CD4-positive, alpha-beta T cell (primary cell): ENCODE measurements at regions of chr14 and their contacts with region 1.

Region 1: DNA sequence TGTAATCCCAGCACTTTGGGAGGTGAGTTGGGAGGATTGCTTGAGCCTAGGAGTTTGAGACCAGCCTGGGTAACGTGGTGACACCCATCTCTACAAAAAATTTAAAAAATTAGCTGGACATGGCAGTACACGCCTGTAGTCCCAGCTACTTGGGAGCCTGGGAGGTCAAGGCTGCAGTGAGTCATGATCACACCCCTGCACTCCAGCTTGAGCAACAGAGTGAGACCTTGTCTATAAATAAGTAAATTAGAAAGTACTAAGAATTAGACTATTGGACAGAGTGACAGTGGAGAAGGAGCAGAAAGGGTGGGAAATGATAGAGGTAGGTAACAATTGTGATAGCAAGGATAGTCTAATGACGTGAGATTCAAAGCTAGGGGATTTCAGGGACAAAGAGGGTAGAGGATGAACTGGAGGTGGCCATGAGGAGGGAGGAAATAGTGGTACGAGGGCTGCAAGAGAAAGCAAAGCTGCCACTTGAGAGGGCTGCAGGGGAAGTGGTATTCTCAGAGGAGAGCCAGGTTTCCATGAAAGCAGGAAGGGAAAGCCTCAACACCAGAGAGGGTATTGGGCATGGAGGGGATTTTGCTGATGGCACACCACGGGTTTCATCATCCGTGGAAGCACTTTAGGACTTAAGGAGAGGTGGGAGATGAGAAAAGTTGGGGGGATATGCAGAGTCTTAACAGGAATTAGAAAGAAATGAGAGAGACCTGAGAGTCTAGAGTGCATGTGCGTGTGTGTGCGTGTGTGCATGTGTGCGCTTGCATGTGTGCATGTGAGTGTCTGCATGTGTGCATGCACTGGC is 85.6 kb downstream of the SYNE2 start:
- DNase-seq: peak in 5 of 14 experiments; percentile 3 to 64 (median 36)
- ATAC-seq: peak; percentile 35
- H3K4me3 ChIP-seq: no peak overlapping the region
- H3K4me3 Mint-ChIP-seq: no peak overlapping the region
- H3K27ac ChIP-seq: peak overlapping the region in 1 of 2 donors; percentile 62
- H3K27ac Mint-ChIP-seq: no peak overlapping the region
- H3K4me1 ChIP-seq: peaks cover 47% of the 10 kb centered on the region
- H3K4me1 Mint-ChIP-seq: peaks cover 37% of the 10 kb centered on the region
- H3K27me3 ChIP-seq: no peaks in the 10 kb centered on the region
- H3K27me3 Mint-ChIP-seq: no peaks in the 10 kb centered on the region
- CTCF ChIP-seq: no peak

Region 2: DNA sequence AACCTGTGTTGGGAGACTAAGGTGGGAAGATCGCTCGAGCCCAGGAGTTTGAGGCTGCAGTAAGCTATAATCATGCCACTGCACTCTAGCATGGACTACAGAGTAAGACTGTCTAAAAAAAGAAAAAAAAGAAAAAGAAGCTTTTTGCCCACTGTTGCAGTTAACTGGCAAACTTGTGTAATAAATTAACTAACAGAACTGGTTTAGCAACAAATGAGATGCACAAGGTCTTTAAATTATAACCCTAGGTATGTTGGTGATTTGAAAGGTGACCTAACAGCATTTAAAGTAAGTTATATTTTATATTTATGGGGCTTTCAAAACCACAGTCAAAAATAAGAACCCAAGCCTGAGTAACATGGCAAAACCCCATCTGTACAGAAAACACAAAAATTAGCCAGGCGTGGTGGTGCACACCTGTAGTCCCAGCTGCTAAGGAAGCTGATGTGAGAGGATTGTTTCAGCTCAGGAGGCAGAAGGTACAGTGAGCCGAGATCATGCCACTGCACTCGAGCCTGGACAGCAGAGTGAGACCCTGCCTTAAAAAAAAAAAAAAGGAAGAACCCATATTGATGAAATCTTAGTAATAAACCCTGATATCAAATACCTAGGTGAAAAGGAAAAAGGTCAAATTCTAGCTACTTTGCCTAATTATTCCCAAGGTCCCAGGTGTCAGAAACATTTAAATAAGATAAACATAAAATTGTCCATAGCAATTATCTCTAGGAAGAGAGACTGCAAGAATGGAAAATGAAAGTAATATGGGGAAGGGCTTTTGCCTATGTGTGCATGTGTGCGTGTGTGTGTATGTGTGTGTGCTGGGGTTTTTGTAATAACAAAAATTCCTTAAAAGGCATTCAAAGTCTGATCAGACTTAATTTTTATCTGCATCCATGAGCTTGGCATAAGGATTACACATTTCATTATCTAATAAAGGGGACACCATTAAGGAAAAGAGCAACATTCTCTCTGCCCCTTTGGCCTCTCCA is 70.2 kb before region 1 on chr14:
- CTCF ChIA-PET with region 1: no interaction called
- POLR2A ChIA-PET with region 1: interaction called, 12 read pairs
- intact Hi-C with region 1: no loop called
- DNase-seq: peak in 6 of 14 experiments; percentile 10 to 84 (median 50)
- ATAC-seq: no peak
- H3K4me3 ChIP-seq: peak overlapping the region; percentile 12
- H3K4me3 Mint-ChIP-seq: peak overlapping the region; percentile 87
- H3K27ac ChIP-seq: peak overlapping the region; percentile 38 to 41
- H3K27ac Mint-ChIP-seq: peak overlapping the region; percentile 93
- H3K4me1 ChIP-seq: peaks cover 63% of the 10 kb centered on the region
- H3K4me1 Mint-ChIP-seq: peaks cover 71% of the 10 kb centered on the region
- H3K27me3 ChIP-seq: no peaks in the 10 kb centered on the region
- H3K27me3 Mint-ChIP-seq: no peaks in the 10 kb centered on the region
- CTCF ChIP-seq: no peak

Region 3: DNA sequence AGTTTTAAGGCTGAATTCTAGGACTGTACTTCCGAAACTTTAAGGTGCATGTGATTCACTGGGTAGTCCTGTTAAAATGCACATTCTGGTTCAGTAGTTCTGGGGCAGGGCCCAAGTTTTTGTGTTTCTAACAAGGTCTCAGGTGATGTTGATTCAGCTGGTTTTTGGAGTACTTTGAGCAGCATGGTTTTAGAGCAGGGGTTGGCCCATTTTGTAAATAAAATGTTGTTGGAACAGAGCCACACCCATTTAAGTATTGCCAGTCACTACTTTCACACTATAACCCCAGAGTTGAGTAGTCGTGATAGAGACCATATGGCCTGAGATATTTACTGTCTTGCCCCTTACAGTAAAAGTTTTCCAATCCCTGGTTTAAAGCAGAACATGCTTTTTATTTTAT is 25.7 kb after region 1 on chr14:
- CTCF ChIA-PET with region 1: no interaction called
- POLR2A ChIA-PET with region 1: interaction called, 3 read pairs
- intact Hi-C with region 1: loop called in 1 of 2 experiments (anchors 2 kb)
- DNase-seq: no peak
- ATAC-seq: no peak
- H3K4me3 ChIP-seq: no peak overlapping the region
- H3K4me3 Mint-ChIP-seq: no peak overlapping the region
- H3K27ac ChIP-seq: no peak overlapping the region
- H3K27ac Mint-ChIP-seq: no peak overlapping the region
- H3K4me1 ChIP-seq: no peaks in the 10 kb centered on the region
- H3K4me1 Mint-ChIP-seq: no peaks in the 10 kb centered on the region
- H3K27me3 ChIP-seq: no peaks in the 10 kb centered on the region
- H3K27me3 Mint-ChIP-seq: no peaks in the 10 kb centered on the region
- CTCF ChIP-seq: no peak